OCI-LY7 (cell line): ENCODE measurements at regions of chr1 and their contacts with region 1.

Region 1: DNA sequence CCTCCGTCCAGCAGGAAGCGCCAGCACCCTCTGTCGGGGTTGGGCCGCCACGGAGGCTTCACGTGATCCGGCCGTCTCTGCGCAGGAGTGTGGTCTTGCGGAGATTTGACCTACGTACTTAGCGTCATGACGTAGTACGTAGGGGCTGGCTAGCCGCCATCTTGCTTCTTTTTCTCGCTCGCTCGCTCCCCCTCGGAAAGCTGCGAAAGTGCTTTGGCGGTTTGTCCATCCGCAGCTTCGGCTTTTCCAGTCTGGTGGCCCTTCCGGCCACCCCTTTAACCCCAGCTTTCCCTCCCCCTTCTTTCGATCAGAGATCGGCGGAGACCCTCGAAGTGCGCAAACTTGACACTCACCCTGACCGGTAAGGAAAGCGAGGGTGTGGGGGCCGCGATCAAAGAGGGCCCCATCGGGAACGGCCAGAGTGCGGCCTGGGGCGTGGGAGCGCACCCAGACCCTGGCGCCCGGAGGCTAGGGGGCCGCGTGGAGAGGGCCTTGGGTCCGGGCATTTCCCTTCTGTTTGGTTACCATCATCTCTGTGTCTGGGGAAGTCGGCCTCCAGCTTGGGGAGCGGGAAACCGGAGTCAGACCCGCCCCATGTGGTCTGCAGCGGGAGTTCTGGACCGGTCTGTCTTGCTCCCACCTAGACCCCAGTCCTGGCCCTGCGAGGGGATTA is at the start of gene PRRC2C:
- DNase-seq: peak; percentile 98
- H3K4me3 ChIP-seq: peak within 1 kb of the TSS; percentile 97
- H3K27ac ChIP-seq: peak within 1 kb of the TSS; percentile 87
- H3K4me1 ChIP-seq: peaks cover 38% of the 10 kb centered on the region
- CTCF ChIP-seq: peak; percentile 86
- total RNA-seq, gene PRRC2C: 73.5 and 75.3 TPM in 2 replicates

Region 2: GRCh38 chr1:171610385-171610784 is 124.9 kb after region 1 on chr1:
- CTCF ChIA-PET with region 1: no interaction called
- POLR2A ChIA-PET with region 1: no interaction called
- intact Hi-C with region 1: no loop called
- DNase-seq: no peak
- H3K4me3 ChIP-seq: no peak overlapping the region
- H3K27ac ChIP-seq: no peak overlapping the region
- H3K4me1 ChIP-seq: no peaks in the 10 kb centered on the region
- CTCF ChIP-seq: no peak

Region 3: DNA sequence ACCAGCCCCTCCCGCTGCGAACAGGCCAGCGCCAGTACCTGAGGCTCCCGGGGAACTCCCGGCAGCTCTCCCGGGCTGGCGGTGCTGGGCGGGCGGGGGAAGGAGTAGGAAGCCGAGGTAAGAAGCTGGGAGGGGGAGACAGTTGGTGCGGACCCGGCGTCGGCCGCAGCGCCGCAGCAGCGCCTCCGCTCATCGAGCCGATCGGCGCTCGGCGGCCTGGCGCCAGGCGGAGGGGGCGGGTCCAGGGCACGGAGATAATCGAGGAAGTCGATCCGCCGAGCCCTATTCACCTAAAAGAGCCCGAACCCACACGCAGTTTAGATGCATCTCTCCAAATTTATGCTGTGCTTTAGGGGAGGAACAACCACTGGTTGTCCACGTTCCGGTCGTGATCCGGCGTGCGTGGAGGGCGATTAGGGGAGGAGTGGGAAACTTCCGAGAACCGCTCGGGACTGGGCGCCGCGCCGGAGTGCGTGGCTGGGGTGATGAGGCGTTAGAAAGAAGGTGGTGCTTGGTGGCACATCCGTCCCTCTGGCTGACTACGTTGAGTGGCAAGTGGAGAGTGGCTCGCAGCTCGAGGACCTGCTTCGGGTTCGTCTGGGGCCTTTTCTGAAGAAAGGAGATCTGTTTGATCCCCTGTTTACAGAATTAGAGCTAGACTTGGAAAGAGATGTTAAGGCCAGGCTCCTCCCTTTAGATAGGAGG is 256.5 kb after region 1 on chr1 and contains the start of gene VAMP4:
- CTCF ChIA-PET with region 1: no interaction called
- POLR2A ChIA-PET with region 1: interaction called, 3 read pairs
- intact Hi-C with region 1: loop called (anchors 2 kb)
- DNase-seq: peak; percentile 90
- H3K4me3 ChIP-seq: peak within 1 kb of the TSS; percentile 85
- H3K27ac ChIP-seq: peak within 1 kb of the TSS; percentile 66
- H3K4me1 ChIP-seq: peaks cover 30% of the 10 kb centered on the region
- CTCF ChIP-seq: no peak
- total RNA-seq, gene VAMP4: 3.2 and 3.4 TPM in 2 replicates